GM10248 (cell line): ENCODE measurements at regions of chr7 and their contacts with region 1.

Region 1: DNA sequence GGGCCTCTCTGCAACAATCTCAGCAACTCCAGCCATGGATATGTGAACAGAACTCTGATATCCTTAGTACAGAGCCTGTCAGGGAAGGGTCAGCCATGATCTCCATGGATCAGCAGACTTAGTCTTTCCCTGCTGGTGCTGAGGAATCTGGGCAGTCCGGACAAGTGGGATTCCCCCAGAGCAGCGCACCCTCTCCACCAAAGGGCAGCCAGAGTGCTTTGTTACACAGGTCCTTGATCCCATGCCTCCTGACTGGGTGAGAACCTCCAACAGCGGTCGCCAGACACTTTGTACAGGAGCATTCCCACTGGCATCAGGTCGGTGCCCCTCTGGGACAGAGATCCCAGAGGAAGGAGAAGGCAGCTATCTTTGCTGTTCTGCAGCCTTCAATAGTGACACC is 38.9 kb downstream of the TPK1 start:
- DNase-seq: no peak
- CTCF ChIP-seq: no peak

Region 2: DNA sequence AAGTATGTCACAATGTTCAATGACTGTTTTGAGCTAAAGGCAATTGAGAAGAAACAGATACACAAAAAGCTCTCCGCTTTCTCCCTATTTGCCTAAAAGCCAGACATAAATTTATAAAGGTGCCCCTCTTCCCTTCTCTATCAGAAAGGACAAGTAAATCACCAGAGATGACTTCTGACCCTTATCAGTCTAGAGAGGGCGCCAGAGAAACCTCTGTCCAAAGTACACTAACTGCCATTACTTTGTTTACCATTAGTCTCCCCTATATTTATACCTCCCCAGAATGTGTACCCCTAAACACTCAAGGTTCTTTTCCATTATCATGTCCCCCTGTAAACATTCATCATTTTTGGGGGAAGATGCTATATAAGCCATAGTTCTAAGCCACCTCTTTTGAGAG is 10.4 kb before region 1 on chr7:
- CTCF ChIA-PET with region 1: interaction called, 19 read pairs
- POLR2A ChIA-PET with region 1: no interaction called
- DNase-seq: peak; percentile 16
- CTCF ChIP-seq: peak; percentile 47

Region 3: GRCh38 chr7:144812379-144813283 is 15.7 kb after region 1 on chr7:
- CTCF ChIA-PET with region 1: interaction called, 11 read pairs
- POLR2A ChIA-PET with region 1: no interaction called
- DNase-seq: no peak
- CTCF ChIP-seq: no peak